H1 (cell line): ENCODE measurements at regions of chr11 and their contacts with region 1.

Region 1: DNA sequence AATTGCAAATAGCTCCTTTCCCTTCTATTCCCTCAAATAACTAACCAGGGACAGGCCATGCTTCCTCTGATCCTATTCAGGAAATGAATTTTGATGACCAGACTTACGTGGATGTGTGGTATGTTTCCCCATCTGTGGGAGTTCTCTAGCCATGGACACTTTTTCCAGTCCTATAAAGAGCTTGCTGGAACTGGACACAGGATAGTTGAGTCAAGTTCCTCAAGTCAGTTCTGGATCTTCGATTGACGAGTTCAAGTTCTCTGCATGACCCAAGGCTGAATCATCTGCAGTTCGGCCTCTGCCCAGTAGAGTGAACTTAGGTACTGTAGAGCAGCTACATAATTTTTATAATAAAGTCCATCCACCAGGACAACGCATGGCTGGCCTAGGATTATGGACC is 52.7 kb upstream of the CCND1 start:
- DNase-seq: no peak
- H3K4me3 ChIP-seq: no peak overlapping the region
- H3K27ac ChIP-seq: no peak overlapping the region
- H3K4me1 ChIP-seq: no peaks in the 10 kb centered on the region
- H3K27me3 ChIP-seq: no peaks in the 10 kb centered on the region
- CTCF ChIP-seq: no peak
- EP300 ChIP-seq: no peak
- POLR2A ChIP-seq: no peak
- RAD21 ChIP-seq: no peak

Region 2: DNA sequence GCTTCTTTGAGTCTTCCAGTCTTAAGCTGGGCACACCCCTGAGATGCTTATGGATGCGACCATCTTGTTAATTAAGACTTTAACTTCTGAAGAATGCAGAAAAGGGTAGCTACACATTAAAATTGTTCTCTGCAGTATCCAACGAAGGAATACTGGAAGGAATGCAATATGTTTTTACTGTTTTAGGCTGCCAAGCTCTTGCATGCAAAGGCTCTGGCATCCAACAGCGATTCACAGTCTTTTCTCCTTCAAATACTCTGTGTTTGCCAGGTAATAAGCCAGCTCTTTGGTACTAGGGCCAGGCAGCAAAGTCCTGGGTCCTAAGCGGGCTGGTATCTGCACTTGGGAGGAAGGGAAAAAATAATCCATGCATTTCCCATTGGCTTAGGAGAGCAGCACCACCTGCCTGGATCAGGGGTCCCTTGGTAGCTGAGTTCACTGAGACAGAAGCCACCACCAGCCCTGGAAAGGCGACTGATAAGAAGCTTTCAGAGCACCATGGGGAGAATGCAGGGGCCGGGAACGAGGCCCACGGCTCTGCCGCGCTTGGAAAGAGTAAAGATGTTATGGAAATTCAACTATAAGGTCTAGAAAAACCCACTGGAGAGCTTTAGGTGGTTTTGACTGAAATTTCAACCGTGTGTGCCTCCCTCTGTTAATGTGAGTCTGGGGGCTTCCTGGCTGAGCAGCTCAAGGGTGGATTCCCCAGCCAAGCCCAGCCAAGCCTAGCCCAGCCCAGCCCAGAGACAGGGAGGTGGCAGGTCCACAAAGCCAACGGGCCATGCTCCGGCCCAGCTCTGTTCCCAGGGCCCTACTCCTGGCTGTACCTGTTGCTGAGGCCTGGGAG is 14.3 kb before region 1 on chr11:
- CTCF ChIA-PET with region 1: interaction called, 11 read pairs
- POLR2A ChIA-PET with region 1: interaction called, 3 read pairs
- DNase-seq: no peak
- H3K4me3 ChIP-seq: no peak overlapping the region
- H3K27ac ChIP-seq: no peak overlapping the region
- H3K4me1 ChIP-seq: no peaks in the 10 kb centered on the region
- H3K27me3 ChIP-seq: no peaks in the 10 kb centered on the region
- CTCF ChIP-seq: no peak
- EP300 ChIP-seq: no peak
- POLR2A ChIP-seq: no peak
- RAD21 ChIP-seq: no peak